ENCODE measurements at regions of chr9 and their contacts with region 1.

Region 1: DNA sequence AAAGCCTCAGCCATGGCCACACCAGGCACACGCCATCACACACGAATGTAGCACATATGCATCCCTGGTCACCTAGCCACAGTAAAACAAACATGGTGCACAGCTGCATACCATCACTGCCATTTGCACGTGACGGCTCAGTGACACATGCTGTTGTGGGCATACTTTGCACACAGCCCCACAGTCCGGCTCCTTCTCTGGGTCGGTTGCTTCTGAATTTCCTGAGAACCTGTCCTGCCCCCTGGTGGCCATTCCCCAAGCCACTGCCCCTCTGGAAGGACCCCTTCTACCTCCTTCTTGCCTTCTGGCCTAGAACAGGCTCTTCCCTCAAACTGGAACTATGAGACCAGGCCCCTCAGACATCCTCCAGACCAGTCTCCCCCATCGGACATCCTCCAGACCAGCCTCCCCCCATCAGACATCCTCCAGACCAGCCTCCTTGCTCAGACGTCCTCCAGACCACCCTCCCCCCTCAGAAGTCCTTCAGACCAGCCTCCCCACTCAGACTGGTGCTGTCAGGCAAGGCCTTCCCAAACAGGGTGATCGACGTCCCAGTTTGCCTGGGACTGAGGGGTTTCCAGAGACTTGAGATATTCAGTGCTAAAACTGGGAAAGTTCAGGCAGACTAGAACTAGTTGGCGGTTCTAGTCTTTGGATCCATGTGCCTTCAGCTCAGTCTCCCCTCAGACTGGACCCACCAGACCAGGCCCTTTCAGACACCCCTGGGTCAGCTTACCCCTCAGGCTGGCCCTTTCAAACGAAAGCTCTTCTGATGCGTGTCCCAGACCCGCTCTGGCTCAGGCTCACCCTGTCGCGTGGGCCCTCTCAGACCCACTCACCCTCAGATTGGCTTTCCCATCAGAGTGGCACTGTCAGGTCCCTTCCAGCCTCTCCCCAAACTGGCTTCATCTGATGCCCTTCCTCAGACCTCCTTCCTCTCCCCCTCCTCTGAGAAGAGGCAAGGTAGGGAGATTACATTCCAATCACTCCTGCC is 24.3 kb upstream of the ENHO start:
- DNase-seq: peak in 4 of 5 donors; percentile 48 to 61 (median 52)
- ATAC-seq: peak; percentile 21 to 70 (median 58)
- H3K4me3 ChIP-seq: no peak overlapping the region
- H3K27ac ChIP-seq: no peak overlapping the region
- H3K4me1 ChIP-seq: peaks cover 0 to 5% (median 0%) of the 10 kb centered on the region in 12 donors
- H3K27me3 ChIP-seq: peaks cover 0 to 4% (median 0%) of the 10 kb centered on the region in 9 donors
- CTCF ChIP-seq: peak; percentile 52 to 75 (median 60)
- POLR2A ChIP-seq: no peak

Region 2: GRCh38 chr9:34328987-34329832 is 217.9 kb before region 1 on chr9 and contains the starts of genes KIF24 and NUDT2:
- intact Hi-C with region 1: loop called in 2 of 10 experiments (anchors 5 kb)
- DNase-seq: peak; percentile 96 to 99 (median 98)
- ATAC-seq: peak; percentile 97 to 98 (median 98)
- H3K4me3 ChIP-seq: peak within 1 kb of the TSS; percentile 47 to 88 (median 80)
- H3K27ac ChIP-seq: peak within 1 kb of the TSS; percentile 88 to 96 (median 91)
- H3K4me1 ChIP-seq: peaks cover 0 to 35% (median 14%) of the 10 kb centered on the region in 12 donors
- H3K27me3 ChIP-seq: no peaks in the 10 kb centered on the region
- CTCF ChIP-seq: peak in 4 of 12 donors; percentile 7 to 33 (median 10)
- POLR2A ChIP-seq: peak in 1 of 2 donors; percentile 88
- total RNA-seq, gene KIF24: 0.25 to 1.6 (median 0.67) TPM
- total RNA-seq, gene NUDT2: 14.1 to 21.3 (median 17.2) TPM

Region 3: GRCh38 chr9:34403554-34404380 is 143.4 kb before region 1 on chr9:
- intact Hi-C with region 1: loop called in 6 of 10 experiments (anchors 2 to 5 kb)
- DNase-seq: peak in 4 of 5 donors; percentile 47 to 66 (median 62)
- ATAC-seq: peak in 2 of 4 donors; percentile 53 to 59
- H3K4me3 ChIP-seq: no peak overlapping the region
- H3K27ac ChIP-seq: no peak overlapping the region
- H3K4me1 ChIP-seq: peaks cover 0 to 6% (median 0%) of the 10 kb centered on the region in 12 donors
- H3K27me3 ChIP-seq: no peaks in the 10 kb centered on the region
- CTCF ChIP-seq: peak; percentile 92 to 99 (median 97)
- POLR2A ChIP-seq: no peak

Region 4: GRCh38 chr9:34443533-34443932 is 103.6 kb before region 1 on chr9:
- intact Hi-C with region 1: loop called in 3 of 10 experiments (anchors 5 kb)
- DNase-seq: no peak
- ATAC-seq: no peak
- H3K4me3 ChIP-seq: no peak overlapping the region
- H3K27ac ChIP-seq: peak overlapping the region in 1 of 12 donors; percentile 3
- H3K4me1 ChIP-seq: peaks cover 8 to 84% (median 62%) of the 10 kb centered on the region in 12 donors
- H3K27me3 ChIP-seq: no peaks in the 10 kb centered on the region
- CTCF ChIP-seq: no peak
- POLR2A ChIP-seq: no peak

Region 5: DNA sequence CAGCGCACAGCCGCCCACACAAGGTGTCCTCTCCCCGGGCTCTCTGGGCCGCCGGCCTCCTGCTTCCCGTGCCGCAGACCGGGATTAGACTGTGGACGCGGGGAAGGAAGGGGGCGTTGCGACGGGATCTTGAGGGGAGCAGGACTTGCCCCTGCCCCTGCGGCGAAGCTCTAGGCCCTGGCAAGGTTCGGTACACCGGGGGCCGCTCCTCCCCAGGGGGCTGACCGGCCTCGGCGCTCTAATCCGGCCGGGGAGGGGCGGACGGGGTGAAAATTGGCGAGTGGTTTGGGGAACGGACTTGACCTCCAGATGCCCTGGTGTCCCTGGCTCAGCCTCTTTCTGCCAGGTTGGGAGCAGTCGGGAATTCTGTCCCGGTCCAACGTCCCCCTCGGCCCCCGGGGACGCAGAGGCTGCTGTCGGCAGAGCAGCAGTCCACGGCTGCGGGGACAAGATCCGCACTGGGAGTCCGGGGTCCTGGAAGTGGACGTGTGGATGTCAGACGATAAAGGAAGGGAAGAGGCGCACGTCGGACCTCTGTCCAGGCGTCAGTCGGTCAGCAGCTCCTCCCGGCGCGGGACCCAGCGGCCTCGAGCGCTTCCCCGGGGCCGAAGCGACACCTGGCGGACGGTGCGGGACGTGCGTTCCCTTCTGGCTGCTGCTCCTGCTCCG is 44.3 kb after region 1 on chr9:
- intact Hi-C with region 1: loop called (anchors 1 to 2 kb)
- DNase-seq: peak; percentile 85 to 92 (median 86)
- ATAC-seq: peak; percentile 68 to 91 (median 85)
- H3K4me3 ChIP-seq: peak overlapping the region in 10 of 12 donors; percentile 13 to 63 (median 52)
- H3K27ac ChIP-seq: peak overlapping the region in 4 of 12 donors; percentile 4 to 50 (median 24)
- H3K4me1 ChIP-seq: peaks cover 0 to 52% (median 30%) of the 10 kb centered on the region in 12 donors
- H3K27me3 ChIP-seq: peaks cover 4 to 77% (median 13%) of the 10 kb centered on the region in 9 donors
- CTCF ChIP-seq: peak; percentile 82 to 98 (median 94)
- POLR2A ChIP-seq: no peak

Measured in heart left ventricle (tissue), 16 donors.